Activated CD4-positive, alpha-beta memory T cell treated with anti-CD3 and anti-CD28 coated beads, Interleukin-2, amount 10 ng/mL, durations not matched to agents 7 days and 5 days (primary cell): ENCODE measurements at regions of chr13 and their contacts with region 1.

Region 1: DNA sequence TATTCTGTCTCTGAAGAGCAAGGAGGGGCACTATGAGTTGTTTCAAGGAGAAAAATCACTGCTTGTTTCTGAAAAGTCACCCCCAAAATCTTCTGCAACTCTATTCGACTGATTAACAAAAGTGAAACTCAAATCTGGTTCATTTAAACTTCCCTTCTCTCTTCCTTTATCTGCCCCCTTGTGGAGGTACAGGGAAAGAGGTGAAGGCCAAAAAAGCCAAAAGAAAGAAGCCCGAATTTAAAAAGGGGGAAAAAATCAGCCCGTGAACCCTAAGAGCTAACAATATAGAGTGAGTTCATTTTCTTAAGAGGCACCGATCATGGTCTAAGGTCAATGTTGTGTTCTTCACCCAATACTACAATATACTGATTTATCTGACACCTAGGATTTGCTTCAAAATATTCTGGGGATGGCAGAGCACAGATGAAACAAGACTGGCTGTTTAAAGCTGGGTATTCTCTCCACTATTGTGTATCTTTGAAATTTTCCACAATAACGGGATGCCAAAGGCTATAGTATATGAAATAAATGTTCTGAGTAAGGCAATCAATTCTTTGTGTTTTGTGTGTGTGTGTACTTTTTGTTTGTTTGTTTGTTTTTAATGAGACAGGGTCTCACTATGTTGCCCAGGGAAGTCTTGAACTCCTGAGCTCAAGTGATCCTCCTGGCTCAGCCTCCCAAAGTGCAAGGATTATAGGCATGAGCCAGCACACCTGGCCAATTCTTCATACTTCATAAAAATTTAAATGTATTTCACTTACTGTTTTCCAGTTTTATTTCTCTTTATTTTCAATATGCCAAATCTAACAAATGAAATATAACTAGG is 55.0 kb upstream of the EEF1AKMT1 start:
- DNase-seq: peak; percentile 31
- H3K4me3 Mint-ChIP-seq: peak overlapping the region; percentile 41
- H3K27ac Mint-ChIP-seq: no peak overlapping the region
- H3K4me1 Mint-ChIP-seq: peaks cover 8% of the 10 kb centered on the region
- H3K27me3 Mint-ChIP-seq: no peaks in the 10 kb centered on the region

Region 2: DNA sequence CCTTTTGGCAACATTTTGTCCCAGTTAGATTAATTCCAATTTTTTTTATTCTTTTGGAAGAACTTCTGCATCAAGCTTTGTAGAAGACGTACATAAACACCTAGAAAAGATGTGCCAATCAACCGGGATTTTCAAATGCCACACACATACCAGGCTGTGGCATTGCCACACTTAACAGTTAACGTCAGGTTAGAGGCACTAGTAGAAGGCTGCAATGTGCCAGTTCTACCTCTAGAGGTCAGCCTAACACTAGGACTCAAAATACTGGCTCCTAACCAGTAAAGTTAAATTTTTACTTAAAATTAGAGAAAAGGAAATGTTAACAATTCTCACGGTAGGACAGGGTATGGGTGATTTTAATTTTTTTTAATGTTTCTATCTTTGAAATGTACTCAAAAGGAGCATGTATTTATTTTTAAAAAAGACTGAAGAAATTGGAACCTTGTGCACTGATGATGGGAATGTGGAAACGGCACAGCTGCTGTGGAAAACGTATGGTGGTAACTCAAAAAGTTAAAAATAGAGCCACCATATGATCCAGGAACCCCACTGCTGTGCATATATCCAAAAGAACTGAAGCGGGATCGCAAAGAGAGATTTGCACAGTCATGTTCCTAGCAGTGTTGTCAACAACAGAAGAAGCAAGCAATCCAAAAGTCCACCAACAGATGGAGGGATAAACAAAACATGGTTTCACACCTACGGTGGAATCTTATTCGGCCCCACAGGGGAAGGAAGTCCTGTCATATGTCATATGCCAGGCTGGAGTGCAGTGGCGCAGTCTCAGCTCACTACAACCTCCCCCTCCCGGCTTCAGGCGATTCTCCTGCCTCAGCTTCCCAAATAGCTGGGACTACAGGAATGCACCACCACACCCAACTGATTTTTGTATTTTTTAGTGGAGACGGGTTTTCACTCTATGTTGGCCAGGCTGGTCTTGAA is 333.4 kb before region 1 on chr13:
- CTCF ChIA-PET with region 1: interaction called, 77 read pairs
- POLR2A ChIA-PET with region 1: interaction called, 5 read pairs
- DNase-seq: peak; percentile 70
- H3K4me3 Mint-ChIP-seq: no peak overlapping the region
- H3K27ac Mint-ChIP-seq: no peak overlapping the region
- H3K4me1 Mint-ChIP-seq: peaks cover 7% of the 10 kb centered on the region
- H3K27me3 Mint-ChIP-seq: no peaks in the 10 kb centered on the region

Region 3: DNA sequence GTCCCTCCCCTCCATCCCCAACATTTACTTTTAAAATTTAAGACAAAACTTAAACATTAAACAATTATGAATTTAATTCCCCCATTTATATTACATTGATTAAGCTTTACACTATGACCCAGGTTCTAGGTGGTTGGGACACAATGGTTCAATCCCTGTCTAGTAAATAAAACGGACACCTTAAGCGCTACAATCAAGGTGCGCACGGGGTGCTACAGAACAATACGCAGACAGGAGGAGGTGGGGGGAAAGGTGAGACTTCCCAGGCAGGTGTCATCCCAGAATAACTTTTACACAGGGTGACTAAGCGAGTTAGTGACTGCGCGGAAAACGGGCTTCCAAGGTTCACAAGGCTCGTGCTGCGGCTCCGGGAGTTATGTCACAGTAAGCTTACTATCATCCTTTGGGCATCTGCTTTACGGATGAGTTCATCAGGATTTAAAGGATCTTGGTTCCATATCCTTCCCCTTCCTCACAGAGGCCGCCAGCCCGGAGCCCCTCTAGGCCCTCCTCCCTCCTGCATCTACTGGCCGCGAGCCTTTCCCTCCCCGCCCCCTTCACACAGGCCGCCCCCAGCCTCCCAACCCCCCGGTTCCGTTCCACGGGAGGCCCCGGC is 262.4 kb before region 1 on chr13:
- CTCF ChIA-PET with region 1: no interaction called
- POLR2A ChIA-PET with region 1: no interaction called
- DNase-seq: no peak
- H3K4me3 Mint-ChIP-seq: peak overlapping the region; percentile 84
- H3K27ac Mint-ChIP-seq: peak overlapping the region; percentile 80
- H3K4me1 Mint-ChIP-seq: peaks cover 19% of the 10 kb centered on the region
- H3K27me3 Mint-ChIP-seq: no peaks in the 10 kb centered on the region

Region 4: DNA sequence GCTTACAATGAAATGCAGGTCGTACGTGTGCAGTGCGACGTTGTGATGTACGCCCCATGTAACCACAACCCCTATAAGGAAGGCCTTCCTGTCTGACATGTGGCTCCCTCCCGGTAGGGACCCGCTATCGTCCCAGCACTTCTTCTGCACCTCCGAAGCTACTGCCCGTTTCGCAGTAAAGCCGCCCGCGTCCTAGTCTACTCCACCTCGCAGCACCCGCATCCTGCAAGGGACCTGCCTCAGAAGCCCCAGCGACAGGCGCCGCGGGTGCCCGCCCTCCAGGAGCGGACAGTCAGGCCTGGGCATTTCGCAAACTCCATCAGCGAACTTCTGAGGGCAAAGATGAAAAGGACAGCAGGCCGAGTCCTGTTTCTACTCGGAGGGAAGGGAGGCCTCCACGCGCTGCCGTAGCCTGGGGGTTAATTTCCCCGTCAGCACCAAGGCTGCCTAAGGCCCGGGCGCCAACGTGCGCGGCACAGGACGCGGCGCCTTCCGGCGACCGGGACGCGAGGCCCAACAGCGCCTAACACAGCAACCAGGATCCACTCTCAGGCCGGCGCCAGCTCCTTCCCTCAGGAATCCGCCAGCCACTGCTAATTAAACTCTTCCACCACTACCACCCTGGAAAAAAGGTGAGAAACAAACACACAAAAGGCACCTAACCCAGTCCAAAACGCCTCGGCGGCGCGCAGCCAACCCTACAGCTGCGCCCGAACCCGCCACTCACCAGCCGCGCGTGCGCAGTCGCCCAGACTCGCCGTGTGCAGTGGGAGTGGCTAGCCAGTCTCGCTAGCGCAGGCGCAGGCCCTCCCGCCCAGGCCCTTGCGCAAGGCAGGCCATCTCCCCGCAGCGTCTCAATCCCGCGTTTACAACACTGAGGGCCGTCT is 55.3 kb before region 1 on chr13 and contains the start of gene EEF1AKMT1:
- CTCF ChIA-PET with region 1: interaction called, 3 read pairs
- POLR2A ChIA-PET with region 1: interaction called, 12 read pairs
- DNase-seq: peak; percentile 95
- H3K4me3 Mint-ChIP-seq: peak within 1 kb of the TSS; percentile 80
- H3K27ac Mint-ChIP-seq: peak within 1 kb of the TSS; percentile 99
- H3K4me1 Mint-ChIP-seq: peaks cover 35% of the 10 kb centered on the region
- H3K27me3 Mint-ChIP-seq: no peaks in the 10 kb centered on the region
- total RNA-seq, gene EEF1AKMT1: 7.9 TPM

Region 5: GRCh38 chr13:20840568-20840967 is 11.8 kb after region 1 on chr13:
- CTCF ChIA-PET with region 1: interaction called, 15 read pairs
- POLR2A ChIA-PET with region 1: no interaction called
- DNase-seq: no peak
- H3K4me3 Mint-ChIP-seq: no peak overlapping the region
- H3K27ac Mint-ChIP-seq: no peak overlapping the region
- H3K4me1 Mint-ChIP-seq: peaks cover 3% of the 10 kb centered on the region
- H3K27me3 Mint-ChIP-seq: no peaks in the 10 kb centered on the region

Region 6: GRCh38 chr13:20924758-20925394 is 96.1 kb after region 1 on chr13:
- CTCF ChIA-PET with region 1: interaction called, 16 read pairs
- POLR2A ChIA-PET with region 1: no interaction called
- DNase-seq: peak; percentile 75
- H3K4me3 Mint-ChIP-seq: no peak overlapping the region
- H3K27ac Mint-ChIP-seq: no peak overlapping the region
- H3K4me1 Mint-ChIP-seq: no peaks in the 10 kb centered on the region
- H3K27me3 Mint-ChIP-seq: peaks cover 1% of the 10 kb centered on the region

Region 7: DNA sequence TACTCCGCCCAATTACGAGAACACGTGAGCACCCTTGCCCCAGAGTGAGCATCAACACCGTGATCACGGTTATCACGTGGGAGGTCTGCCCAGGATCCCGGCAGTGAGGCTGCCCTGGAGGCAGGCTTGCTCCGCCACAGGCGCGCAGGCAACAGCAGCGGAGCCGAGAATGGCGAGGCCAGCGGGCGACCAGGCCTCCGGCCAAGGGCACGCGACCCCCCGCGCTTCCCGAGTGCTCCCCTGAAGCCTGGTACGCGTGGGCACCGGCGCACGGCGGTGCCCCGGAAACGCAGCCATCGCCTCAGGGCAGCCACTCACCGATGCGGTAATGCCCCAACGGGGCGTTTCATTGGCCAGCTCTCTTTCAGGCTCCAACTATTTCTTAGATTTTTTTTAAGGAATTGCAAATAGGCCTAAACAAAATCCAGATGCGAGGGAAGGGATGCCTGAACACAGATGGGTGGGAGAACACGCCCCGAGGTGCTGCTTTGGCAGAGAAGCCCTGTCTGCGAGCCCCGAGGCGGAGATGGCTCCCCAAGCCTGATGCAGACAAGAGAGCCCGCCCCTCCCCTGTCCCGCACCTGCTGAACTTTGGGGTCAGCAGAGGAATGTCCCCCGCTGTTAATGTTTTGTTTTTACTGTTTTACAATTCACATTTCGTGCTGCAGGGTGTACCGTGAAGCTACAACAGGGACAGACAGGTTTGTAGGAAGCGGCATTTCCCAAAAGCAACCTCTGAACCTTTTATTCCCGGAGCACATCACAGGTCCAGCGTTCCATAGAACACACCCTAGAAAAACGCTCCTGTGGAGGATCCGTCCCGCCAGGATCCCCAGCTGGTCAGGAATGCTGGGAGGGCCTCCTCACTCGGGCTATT is 497.6 kb after region 1 on chr13:
- CTCF ChIA-PET with region 1: no interaction called
- POLR2A ChIA-PET with region 1: no interaction called
- DNase-seq: no peak
- H3K4me3 Mint-ChIP-seq: peak overlapping the region; percentile 23
- H3K27ac Mint-ChIP-seq: no peak overlapping the region
- H3K4me1 Mint-ChIP-seq: peaks cover 53% of the 10 kb centered on the region
- H3K27me3 Mint-ChIP-seq: no peaks in the 10 kb centered on the region